Activated CD4-positive, alpha-beta memory T cell treated with anti-CD3 and anti-CD28 coated beads for 36 hours (primary cell): ENCODE measurements at regions of chr2 and their contacts with region 1.

Region 1: DNA sequence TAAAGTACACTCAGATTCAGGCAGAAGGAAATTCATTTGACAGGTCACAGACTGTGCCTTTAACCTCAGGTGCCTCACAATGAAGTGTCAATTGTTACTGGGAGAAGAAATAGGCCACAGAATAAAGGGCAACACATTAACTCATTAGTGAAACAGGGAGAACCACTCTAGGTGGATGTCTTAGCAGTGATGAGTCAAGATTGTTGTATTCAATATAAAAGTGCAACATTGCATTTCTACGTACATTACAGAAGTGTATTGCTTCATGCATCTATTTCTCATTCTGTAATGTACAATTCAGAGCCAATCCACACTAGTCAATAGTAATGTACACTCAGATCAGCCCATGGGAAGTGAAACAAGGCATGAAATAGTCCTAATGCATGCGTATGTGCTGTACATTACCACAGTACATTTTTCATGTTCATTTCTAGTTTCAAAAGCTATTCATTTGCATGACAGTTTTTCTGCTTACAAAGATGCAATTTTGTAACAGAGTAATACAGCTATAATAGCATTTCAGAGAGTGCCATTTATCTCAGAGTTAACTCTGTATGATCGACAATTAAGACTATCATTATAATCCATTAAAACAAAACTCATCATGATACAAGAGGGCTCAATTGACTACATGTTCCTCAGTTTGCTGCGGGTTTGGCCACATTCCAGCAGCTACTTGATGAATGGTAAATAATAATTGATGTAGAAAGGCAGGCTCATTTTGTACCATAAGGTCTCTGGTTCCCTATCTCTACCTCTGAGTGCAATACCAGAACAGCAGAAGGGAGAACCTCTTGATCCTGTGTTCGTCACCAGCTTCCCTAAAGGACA is 12.2 kb upstream of the ARL5A start:
- DNase-seq: no peak
- H3K4me3 Mint-ChIP-seq: no peak overlapping the region
- H3K27ac Mint-ChIP-seq: no peak overlapping the region
- H3K4me1 Mint-ChIP-seq: no peaks in the 10 kb centered on the region
- H3K27me3 Mint-ChIP-seq: peaks cover 3% of the 10 kb centered on the region

Region 2: DNA sequence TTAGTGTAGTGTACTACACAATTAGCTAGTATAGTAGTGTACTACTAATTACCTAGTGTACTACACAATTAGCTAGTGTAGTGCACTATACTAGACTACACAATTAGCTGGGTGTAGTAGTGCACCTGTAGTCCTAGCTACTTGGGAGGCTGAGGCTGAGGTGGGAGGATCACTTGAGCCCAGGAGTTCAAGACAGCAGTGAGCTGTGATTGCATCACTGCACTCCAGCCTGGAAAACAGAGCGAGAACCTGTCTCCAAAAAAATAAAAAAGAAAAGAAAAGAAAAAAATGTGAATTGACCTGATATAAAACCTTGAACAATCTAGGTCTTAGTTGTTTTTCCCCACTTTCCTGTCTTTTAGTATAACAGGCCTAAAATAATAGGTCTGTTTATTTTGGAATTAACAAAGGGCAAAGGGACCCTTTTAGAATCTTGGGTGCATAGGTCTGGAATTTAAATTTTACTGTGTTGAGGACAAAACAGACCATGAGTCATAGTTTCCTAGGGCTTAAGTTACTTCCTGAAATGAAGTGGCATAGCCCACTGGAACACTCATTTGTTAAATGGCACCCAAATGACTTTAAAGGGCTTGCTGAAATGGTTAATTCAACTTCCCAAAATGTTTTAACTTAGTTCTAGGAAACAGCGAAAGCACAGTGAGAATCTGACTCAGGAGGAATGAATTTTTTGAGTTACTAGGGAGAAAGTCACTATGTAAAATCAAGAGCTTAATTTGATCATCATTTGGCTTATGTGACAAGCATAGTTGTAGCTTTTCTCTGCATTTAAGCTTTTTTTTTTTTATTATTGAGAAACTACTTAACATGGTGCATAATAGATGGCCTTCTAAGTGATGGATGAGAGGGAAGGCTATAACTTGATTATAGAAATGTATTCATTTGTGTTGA is 38.5 kb after region 1 on chr2:
- CTCF ChIA-PET with region 1: no interaction called
- POLR2A ChIA-PET with region 1: no interaction called
- intact Hi-C with region 1: loop called (anchors 1 kb)
- DNase-seq: no peak
- H3K4me3 Mint-ChIP-seq: no peak overlapping the region
- H3K27ac Mint-ChIP-seq: no peak overlapping the region
- H3K4me1 Mint-ChIP-seq: peaks cover 11% of the 10 kb centered on the region
- H3K27me3 Mint-ChIP-seq: no peaks in the 10 kb centered on the region